ENCODE measurements at regions of chr1 and their contacts with region 1.

Region 1: DNA sequence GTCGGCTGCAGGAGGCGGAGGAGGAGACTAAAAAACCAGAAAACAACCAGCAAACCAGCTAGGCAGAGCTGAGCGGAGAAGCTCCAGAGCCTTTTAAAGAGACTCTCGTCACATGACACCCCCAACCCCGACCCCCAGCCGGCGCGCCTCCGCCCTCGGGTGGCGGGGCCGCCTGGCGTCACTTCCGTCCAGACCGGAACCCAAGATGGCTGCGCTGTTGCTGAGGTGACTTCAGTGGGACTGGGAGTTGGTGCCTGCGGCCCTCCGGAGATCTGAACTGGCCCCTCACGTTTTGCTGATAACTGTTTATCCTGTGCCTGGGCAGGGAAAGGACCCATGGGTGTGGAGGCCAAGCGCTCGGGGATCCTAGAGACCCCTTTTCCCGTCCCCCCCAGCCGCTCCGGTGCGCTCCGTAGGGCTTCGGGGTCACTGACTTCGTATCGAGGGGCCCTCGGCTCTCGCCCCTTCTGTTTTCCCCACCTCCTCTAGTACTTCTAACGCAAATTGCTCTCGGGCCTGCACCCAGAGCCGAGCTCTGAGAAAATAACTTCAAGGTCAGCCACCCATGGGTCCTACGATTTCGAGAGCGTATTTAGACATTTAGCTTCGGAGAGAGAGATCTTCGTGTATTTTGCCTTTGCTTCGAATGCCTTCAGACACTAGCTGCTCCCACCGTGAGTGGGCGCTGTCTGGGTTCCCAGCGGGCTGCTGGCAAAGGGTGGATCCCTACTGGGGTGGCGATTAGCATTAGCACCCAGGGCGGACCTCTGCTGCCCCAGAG is at the start of gene SDHC:
- DNase-seq: peak; percentile 68 to 92
- H3K4me3 ChIP-seq: peak within 1 kb of the TSS; percentile 74 to 98 (median 94)
- H3K27ac ChIP-seq: peak within 1 kb of the TSS; percentile 96
- H3K4me1 ChIP-seq: peaks cover 0 to 8% (median 6%) of the 10 kb centered on the region in 4 experiments; a peak in 6 of 7 replicates
- H3K27me3 ChIP-seq: no peaks in the 10 kb centered on the region; a peak in 1 of 7 replicates
- CTCF ChIP-seq: peak; percentile 26 to 53 (median 38)
- EP300 ChIP-seq: peak in 1 of 2 experiments; percentile 56; a peak in 1 of 3 replicates
- POLR2A ChIP-seq: peak; percentile 91 to 99
- RAD21 ChIP-seq: peak in 1 of 2 experiments; percentile 4; a peak in 1 of 4 replicates
- total RNA-seq, gene SDHC: 216 and 224 TPM in 2 replicates

Region 2: DNA sequence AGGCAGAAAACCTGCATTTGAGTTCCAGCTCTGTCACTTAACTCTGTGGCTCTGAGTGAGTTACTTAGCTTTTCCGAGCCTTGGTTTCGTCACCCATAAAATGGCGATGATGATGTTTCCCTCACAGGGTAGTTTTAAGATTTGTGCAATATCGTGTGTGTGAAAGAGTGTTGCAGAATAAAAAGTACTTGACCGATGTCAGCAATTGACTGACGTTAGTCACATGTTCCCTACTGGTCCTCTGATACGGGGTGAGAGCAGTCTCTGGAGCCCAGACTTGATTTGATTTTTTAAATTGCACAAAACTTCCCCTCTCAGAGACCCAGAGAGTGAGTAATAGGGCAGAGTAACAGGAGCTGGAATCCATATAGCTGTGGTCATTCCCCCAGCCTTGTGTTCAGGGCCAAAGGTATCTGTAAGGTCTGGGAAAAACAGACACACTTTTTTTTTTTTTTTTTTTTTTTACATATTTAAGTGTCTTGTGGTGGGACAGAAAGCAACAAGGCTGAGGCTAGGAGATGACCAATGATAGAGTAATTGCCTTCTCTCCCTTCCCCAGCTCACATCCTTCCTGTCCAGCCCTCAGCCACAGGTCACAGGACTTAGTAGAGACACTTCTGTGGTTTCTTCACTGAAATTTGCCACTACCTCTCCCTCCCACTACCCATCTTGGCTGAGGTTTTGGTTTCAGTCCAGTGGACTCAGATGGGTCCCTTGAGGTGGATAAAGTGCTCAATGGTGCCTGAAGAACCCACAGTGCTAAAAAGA is 97.3 kb before region 1 on chr1:
- CTCF ChIA-PET with region 1: interaction called, 201 read pairs
- POLR2A ChIA-PET with region 1: interaction called, 10 read pairs
- DNase-seq: no peak
- H3K4me3 ChIP-seq: no peak overlapping the region
- H3K27ac ChIP-seq: no peak overlapping the region
- H3K4me1 ChIP-seq: peaks cover 0 to 13% (median 0%) of the 10 kb centered on the region in 4 experiments; a peak in 3 of 7 replicates
- H3K27me3 ChIP-seq: 0 out of 7 replicates have a peak, but pooled peaks cover 0 to under 1% (median 0%) of the 10 kb centered on the region in 4 experiments
- CTCF ChIP-seq: no peak
- EP300 ChIP-seq: no peak
- POLR2A ChIP-seq: no peak
- RAD21 ChIP-seq: no peak

Region 3: GRCh38 chr1:161274874-161275273 is 39.5 kb before region 1 on chr1:
- CTCF ChIA-PET with region 1: no interaction called
- POLR2A ChIA-PET with region 1: no interaction called
- DNase-seq: no peak
- H3K4me3 ChIP-seq: no peak overlapping the region
- H3K27ac ChIP-seq: no peak overlapping the region
- H3K4me1 ChIP-seq: no peaks in the 10 kb centered on the region
- H3K27me3 ChIP-seq: no peaks in the 10 kb centered on the region
- CTCF ChIP-seq: no peak
- EP300 ChIP-seq: no peak
- POLR2A ChIP-seq: no peak
- RAD21 ChIP-seq: no peak

Region 4: GRCh38 chr1:161330346-161330745 is 16.0 kb after region 1 on chr1:
- CTCF ChIA-PET with region 1: interaction called, 10 read pairs
- POLR2A ChIA-PET with region 1: interaction called, 4 read pairs
- DNase-seq: no peak
- H3K4me3 ChIP-seq: no peak overlapping the region
- H3K27ac ChIP-seq: no peak overlapping the region
- H3K4me1 ChIP-seq: no peaks in the 10 kb centered on the region
- H3K27me3 ChIP-seq: no peaks in the 10 kb centered on the region
- CTCF ChIP-seq: no peak
- EP300 ChIP-seq: no peak
- POLR2A ChIP-seq: no peak
- RAD21 ChIP-seq: no peak

Measured in H1 (cell line).